ENCODE measurements at regions of chr3 and their contacts with region 1.

Region 1: DNA sequence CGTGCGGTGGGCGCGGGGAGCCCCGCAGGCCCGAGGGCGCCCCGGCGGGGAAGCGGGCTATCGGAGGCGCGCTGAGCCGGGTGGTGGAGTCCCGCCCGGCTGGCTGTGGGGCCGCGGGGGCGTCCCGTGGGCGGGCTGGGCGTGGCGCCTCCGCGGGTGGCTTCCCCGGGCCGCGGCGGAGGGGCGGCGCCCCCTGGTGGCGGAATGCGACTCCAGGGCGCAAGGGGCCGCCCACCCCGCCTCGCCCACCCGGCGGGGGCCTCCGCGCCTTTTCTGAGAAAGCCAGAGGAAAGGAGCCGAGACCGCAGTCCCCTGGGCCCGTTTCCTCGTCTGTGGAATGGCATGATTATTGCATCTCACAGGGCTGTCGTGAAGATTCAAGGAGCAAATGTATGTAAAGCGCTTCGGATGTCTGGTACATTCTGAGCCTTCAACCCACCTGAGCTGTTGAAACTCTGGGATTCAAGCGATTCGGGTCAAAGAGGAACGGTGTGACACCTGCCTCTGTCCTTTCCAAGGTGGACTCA is 31.9 kb upstream of the RAB6B start:
- DNase-seq: peak; percentile 83
- ATAC-seq: peak; percentile 82
- H3K4me3 Mint-ChIP-seq: peak overlapping the region; percentile 38
- H3K27ac Mint-ChIP-seq: no peak overlapping the region
- H3K4me1 Mint-ChIP-seq: peaks cover 6% of the 10 kb centered on the region
- H3K27me3 Mint-ChIP-seq: peaks cover 16% of the 10 kb centered on the region

Region 2: GRCh38 chr3:133464573-133464972 is 463.0 kb before region 1 on chr3:
- CTCF ChIA-PET with region 1: no interaction called
- POLR2A ChIA-PET with region 1: no interaction called
- intact Hi-C with region 1: loop called in 1 of 2 experiments (anchors 10 kb)
- DNase-seq: no peak
- ATAC-seq: no peak
- H3K4me3 Mint-ChIP-seq: no peak overlapping the region
- H3K27ac Mint-ChIP-seq: no peak overlapping the region
- H3K4me1 Mint-ChIP-seq: peaks cover 44% of the 10 kb centered on the region
- H3K27me3 Mint-ChIP-seq: no peaks in the 10 kb centered on the region

Region 3: GRCh38 chr3:133661454-133662277 is 265.9 kb before region 1 on chr3 and contains the start of gene TOPBP1:
- CTCF ChIA-PET with region 1: no interaction called
- POLR2A ChIA-PET with region 1: no interaction called
- intact Hi-C with region 1: loop called (anchors 1 to 5 kb)
- DNase-seq: peak; percentile 94
- ATAC-seq: peak; percentile 85
- H3K4me3 Mint-ChIP-seq: peak within 1 kb of the TSS; percentile 91
- H3K27ac Mint-ChIP-seq: peak within 1 kb of the TSS; percentile 98
- H3K4me1 Mint-ChIP-seq: peaks cover 33% of the 10 kb centered on the region
- H3K27me3 Mint-ChIP-seq: no peaks in the 10 kb centered on the region
- total RNA-seq, gene TOPBP1: 80.9 to 94.6 TPM

Region 4: DNA sequence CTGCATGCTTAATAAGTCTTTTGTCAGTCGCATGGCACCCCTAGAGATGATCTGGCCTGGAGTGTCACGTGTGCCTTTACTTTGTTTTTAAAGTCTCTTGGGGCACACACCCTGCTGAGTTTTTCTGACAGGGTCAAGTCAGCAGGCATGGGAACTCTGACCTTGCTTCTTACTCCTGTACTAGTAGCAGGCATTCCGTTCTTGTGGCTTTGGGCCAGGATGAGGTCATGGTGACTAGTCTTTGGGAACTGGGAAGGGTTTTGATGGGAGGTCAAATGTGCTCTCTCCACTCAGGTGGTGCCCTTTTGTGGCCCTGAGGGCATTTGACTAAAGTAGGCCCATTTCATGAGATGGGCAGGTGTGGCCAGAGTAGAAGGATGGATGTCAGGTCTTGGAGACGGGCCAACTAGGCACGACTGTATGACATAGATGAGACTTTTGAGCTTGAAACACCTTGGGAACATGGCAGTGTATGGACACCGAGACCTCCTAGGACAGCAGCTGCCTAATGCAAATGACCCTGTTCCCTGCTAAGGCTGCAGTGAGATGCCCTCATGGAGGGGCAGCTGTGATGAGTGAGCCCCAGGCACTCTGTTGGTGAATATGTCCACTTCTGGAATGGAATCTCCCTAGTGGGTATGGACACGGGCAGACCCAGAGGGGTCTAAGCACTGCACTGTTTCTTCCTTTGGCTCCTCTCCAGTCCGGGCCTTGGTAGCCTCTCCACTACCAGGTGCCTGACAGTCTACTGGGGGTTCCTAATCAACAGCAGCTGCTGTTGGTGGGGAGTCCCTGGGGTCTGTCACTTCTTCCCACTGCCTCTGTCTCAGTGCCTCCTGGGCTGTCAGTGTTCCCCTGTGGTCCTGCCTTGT is 105.6 kb before region 1 on chr3:
- CTCF ChIA-PET with region 1: interaction called, 4 read pairs
- POLR2A ChIA-PET with region 1: no interaction called
- intact Hi-C with region 1: loop called (anchors 1 kb)
- DNase-seq: peak; percentile 21
- ATAC-seq: peak; percentile 39
- H3K4me3 Mint-ChIP-seq: no peak overlapping the region
- H3K27ac Mint-ChIP-seq: no peak overlapping the region
- H3K4me1 Mint-ChIP-seq: peaks cover 3% of the 10 kb centered on the region
- H3K27me3 Mint-ChIP-seq: no peaks in the 10 kb centered on the region

Region 5: DNA sequence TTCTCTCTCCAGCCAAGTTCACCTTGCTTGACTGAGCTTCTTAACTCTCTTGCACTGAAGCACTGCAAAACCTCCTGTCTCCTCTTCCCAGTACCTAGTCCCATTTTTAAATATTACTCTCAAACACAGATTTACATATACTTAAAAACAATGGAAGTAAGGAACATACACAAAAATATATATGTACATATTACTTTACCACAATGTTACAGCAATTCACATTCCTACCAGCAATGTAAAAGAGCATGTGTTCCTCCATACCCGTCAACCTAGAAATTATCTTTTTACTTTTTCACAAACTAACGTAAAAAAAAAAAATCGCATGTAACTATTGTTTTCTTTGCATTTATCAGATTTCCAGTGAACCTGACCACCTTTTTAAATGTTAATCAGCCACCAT is 262.6 kb after region 1 on chr3:
- CTCF ChIA-PET with region 1: no interaction called
- POLR2A ChIA-PET with region 1: no interaction called
- intact Hi-C with region 1: loop called in 1 of 2 experiments (anchors 5 kb)
- DNase-seq: no peak
- ATAC-seq: no peak
- H3K4me3 Mint-ChIP-seq: no peak overlapping the region
- H3K27ac Mint-ChIP-seq: no peak overlapping the region
- H3K4me1 Mint-ChIP-seq: no peaks in the 10 kb centered on the region
- H3K27me3 Mint-ChIP-seq: no peaks in the 10 kb centered on the region

Region 6: GRCh38 chr3:134299185-134299887 is 371.7 kb after region 1 on chr3:
- CTCF ChIA-PET with region 1: no interaction called
- POLR2A ChIA-PET with region 1: no interaction called
- intact Hi-C with region 1: loop called in 1 of 2 experiments (anchors 10 kb)
- DNase-seq: no peak
- ATAC-seq: no peak
- H3K4me3 Mint-ChIP-seq: no peak overlapping the region
- H3K27ac Mint-ChIP-seq: no peak overlapping the region
- H3K4me1 Mint-ChIP-seq: no peaks in the 10 kb centered on the region
- H3K27me3 Mint-ChIP-seq: peaks cover 32% of the 10 kb centered on the region

Region 7: DNA sequence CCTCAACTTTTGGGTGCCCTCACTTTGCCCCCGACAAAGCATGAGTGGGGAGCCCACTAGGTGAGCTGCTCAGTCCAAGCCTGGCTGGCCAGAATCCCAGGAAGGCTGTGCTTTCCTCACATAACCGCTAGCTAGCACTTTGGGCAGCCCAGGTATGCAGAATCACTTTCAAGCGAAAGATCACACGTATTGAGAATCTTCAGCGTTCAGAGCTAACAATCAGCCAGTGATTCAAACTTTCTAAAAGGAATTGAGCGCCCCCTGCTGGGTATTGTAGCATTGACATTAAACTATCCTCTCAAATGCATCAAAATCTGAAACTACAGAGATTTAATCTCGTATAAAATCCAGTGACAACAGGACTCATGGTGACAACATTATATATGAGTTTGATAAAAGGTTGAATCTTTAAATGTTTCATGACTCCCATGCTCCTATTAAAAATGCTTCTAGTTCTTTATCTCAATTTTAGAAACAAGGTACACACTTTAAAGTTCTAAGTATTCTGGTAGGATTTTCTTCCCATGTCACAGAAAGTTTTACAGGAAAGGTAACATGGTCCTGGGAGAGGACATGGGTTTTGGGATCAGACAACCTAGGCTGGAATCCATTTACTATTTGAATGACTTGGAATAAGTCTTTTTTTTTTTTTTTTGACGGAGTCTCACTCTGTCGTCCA is 546.4 kb after region 1 on chr3:
- CTCF ChIA-PET with region 1: no interaction called
- POLR2A ChIA-PET with region 1: no interaction called
- intact Hi-C with region 1: loop called in 1 of 2 experiments (anchors 2 kb)
- DNase-seq: peak; percentile 88
- ATAC-seq: peak; percentile 78
- H3K4me3 Mint-ChIP-seq: no peak overlapping the region
- H3K27ac Mint-ChIP-seq: no peak overlapping the region
- H3K4me1 Mint-ChIP-seq: no peaks in the 10 kb centered on the region
- H3K27me3 Mint-ChIP-seq: no peaks in the 10 kb centered on the region

Measured in activated CD4-positive, alpha-beta T cell treated with anti-CD3 and anti-CD28 coated beads for 36 hours (primary cell).